ENCODE measurements at regions of chr6 and their contacts with region 1.

Region 1: DNA sequence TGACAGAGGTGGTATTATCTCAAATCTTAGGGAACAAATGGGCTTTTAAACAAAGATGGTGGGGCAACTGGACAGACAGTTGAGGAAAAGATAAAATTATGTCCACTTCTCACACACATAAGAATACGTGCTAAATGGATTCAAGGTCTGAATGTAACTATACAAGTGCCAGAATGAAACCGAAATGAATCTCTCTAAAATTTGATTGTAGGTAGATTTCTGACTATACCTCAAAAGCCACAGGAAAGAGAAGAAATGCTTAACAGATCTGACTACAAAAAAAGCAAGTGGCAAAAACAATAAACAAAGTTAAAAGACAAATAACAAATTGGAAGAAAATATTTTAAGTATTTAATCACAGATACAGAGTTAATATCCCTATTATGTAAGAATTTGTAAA is 182.7 kb upstream of the OLIG3 start:
- DNase-seq: no peak

Region 2: GRCh38 chr6:136831873-136832562 is 844.9 kb before region 1 on chr6:
- intact Hi-C with region 1: no loop called
- DNase-seq: no peak

Region 3: GRCh38 chr6:137641474-137642077 is 35.3 kb before region 1 on chr6:
- intact Hi-C with region 1: no loop called
- DNase-seq: no peak

Region 4: DNA sequence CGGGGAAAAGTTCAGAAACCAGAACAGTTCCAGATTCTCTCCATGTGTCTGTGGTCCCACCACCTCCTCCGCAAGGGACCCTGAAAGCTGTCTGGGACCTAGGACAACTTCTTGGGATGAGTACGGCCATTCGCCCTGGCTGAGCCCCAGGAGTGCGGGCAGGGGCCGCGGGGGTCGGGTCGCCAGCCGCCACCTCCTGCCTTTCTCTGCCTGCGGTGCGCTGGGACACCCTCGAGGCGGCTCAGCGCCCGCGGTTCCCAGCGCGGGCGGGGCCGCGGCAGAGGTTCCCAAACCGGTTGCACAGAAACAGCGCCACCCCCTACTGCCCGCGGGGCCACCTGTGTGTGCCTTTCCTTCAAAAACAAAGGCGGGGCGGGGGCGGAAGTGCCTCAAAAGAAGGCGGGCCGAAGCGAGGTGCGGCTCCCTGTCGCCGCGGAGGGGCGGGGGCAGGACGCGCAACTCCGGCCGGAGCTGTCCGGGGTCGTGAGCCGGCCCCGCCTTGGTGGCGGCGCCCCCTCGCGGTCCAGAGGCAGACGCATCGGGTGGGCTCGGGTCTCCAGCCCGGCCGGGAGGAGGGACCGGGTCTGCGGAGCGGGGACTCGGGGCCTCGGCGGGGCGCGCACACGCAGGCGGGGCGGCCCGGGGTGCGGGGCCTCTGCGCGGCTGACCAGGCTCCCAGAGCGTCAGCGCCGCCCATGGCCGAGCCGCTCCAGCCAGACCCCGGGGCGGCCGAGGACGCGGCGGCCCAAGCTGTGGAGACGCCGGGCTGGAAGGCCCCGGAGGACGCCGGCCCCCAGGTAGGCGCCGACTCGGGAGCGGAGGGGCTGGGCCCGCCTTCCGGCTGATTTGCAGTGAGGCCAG is 727.1 kb after region 1 on chr6 and contains the start of gene HEBP2:
- intact Hi-C with region 1: loop called in 1 of 2 experiments (anchors 10 kb)
- DNase-seq: peak; percentile 97
- total RNA-seq, gene HEBP2: 61.0 to 78.9 TPM

Measured in posterior vena cava (tissue), 2 donors.